Activated CD4-positive, alpha-beta memory T cell treated with anti-CD3 and anti-CD28 coated beads for 36 hours (primary cell): ENCODE measurements at regions of chr11 and their contacts with region 1.

Region 1: DNA sequence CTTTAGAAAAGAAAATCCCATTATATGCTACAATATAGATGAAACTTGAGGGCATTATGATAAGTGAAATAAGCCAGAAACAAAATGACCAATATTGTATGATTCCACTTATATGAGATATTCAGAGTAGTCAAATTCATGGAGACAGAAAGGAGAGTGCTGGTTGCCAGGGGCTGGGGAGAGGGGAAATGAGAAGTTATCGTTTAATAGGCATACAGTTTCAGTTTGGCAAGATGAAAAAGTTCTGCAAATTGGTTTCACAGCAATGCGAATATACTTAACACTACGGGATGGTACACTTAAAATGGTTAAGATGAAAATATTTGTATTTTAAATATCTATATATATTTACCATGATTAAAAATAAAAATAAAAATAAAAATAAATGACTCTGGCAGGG is 31.1 kb upstream of the RDX start:
- DNase-seq: no peak
- H3K4me3 Mint-ChIP-seq: peak overlapping the region; percentile 91
- H3K27ac Mint-ChIP-seq: peak overlapping the region; percentile 84
- H3K4me1 Mint-ChIP-seq: peaks cover 20% of the 10 kb centered on the region
- H3K27me3 Mint-ChIP-seq: no peaks in the 10 kb centered on the region

Region 2: GRCh38 chr11:109527496-109527895 is 800.0 kb before region 1 on chr11:
- CTCF ChIA-PET with region 1: no interaction called
- POLR2A ChIA-PET with region 1: no interaction called
- intact Hi-C with region 1: no loop called
- DNase-seq: no peak
- H3K4me3 Mint-ChIP-seq: no peak overlapping the region
- H3K27ac Mint-ChIP-seq: no peak overlapping the region
- H3K4me1 Mint-ChIP-seq: no peaks in the 10 kb centered on the region
- H3K27me3 Mint-ChIP-seq: no peaks in the 10 kb centered on the region

Region 3: GRCh38 chr11:110296226-110297075 is 31.1 kb before region 1 on chr11 and contains the start of gene RDX:
- CTCF ChIA-PET with region 1: no interaction called
- POLR2A ChIA-PET with region 1: no interaction called
- intact Hi-C with region 1: loop called (anchors 1 kb)
- DNase-seq: peak; percentile 69
- H3K4me3 Mint-ChIP-seq: peak within 1 kb of the TSS; percentile 85
- H3K27ac Mint-ChIP-seq: peak within 1 kb of the TSS; percentile 78
- H3K4me1 Mint-ChIP-seq: peaks cover 41% of the 10 kb centered on the region
- H3K27me3 Mint-ChIP-seq: no peaks in the 10 kb centered on the region
- total RNA-seq, gene RDX: 47.9 to 56.2 TPM

Region 4: GRCh38 chr11:110311783-110312579 is 15.5 kb before region 1 on chr11:
- CTCF ChIA-PET with region 1: interaction called, 4 read pairs
- POLR2A ChIA-PET with region 1: interaction called, 3 read pairs
- intact Hi-C with region 1: loop called (anchors 2 kb)
- DNase-seq: peak; percentile 41
- H3K4me3 Mint-ChIP-seq: no peak overlapping the region
- H3K27ac Mint-ChIP-seq: peak overlapping the region; percentile 69
- H3K4me1 Mint-ChIP-seq: peaks cover 15% of the 10 kb centered on the region
- H3K27me3 Mint-ChIP-seq: no peaks in the 10 kb centered on the region

Region 5: GRCh38 chr11:110337570-110338193 is 10.2 kb after region 1 on chr11:
- CTCF ChIA-PET with region 1: no interaction called
- POLR2A ChIA-PET with region 1: interaction called, 5 read pairs
- intact Hi-C with region 1: loop called (anchors 1 kb)
- DNase-seq: peak; percentile 79
- H3K4me3 Mint-ChIP-seq: no peak overlapping the region
- H3K27ac Mint-ChIP-seq: peak overlapping the region; percentile 45
- H3K4me1 Mint-ChIP-seq: peaks cover 23% of the 10 kb centered on the region
- H3K27me3 Mint-ChIP-seq: no peaks in the 10 kb centered on the region